Activated CD4-positive, alpha-beta T cell treated with anti-CD3 and anti-CD28 coated beads for 36 hours (primary cell): ENCODE measurements at regions of chr11 and their contacts with region 1.

Region 1: GRCh38 chr11:33987975-33988580 is 63.5 kb upstream of the CAPRIN1 start:
- DNase-seq: peak; percentile 87
- ATAC-seq: peak; percentile 91
- H3K4me3 Mint-ChIP-seq: no peak overlapping the region
- H3K27ac Mint-ChIP-seq: no peak overlapping the region
- H3K4me1 Mint-ChIP-seq: peaks cover 4% of the 10 kb centered on the region
- H3K27me3 Mint-ChIP-seq: peaks cover 7% of the 10 kb centered on the region

Region 2: GRCh38 chr11:33808228-33808828 is 179.8 kb before region 1 on chr11:
- CTCF ChIA-PET with region 1: interaction called, 19 read pairs
- POLR2A ChIA-PET with region 1: no interaction called
- intact Hi-C with region 1: loop called (anchors 1 to 2 kb)
- DNase-seq: peak; percentile 91
- ATAC-seq: peak; percentile 90
- H3K4me3 Mint-ChIP-seq: no peak overlapping the region
- H3K27ac Mint-ChIP-seq: no peak overlapping the region
- H3K4me1 Mint-ChIP-seq: no peaks in the 10 kb centered on the region
- H3K27me3 Mint-ChIP-seq: peaks cover 6% of the 10 kb centered on the region

Region 3: DNA sequence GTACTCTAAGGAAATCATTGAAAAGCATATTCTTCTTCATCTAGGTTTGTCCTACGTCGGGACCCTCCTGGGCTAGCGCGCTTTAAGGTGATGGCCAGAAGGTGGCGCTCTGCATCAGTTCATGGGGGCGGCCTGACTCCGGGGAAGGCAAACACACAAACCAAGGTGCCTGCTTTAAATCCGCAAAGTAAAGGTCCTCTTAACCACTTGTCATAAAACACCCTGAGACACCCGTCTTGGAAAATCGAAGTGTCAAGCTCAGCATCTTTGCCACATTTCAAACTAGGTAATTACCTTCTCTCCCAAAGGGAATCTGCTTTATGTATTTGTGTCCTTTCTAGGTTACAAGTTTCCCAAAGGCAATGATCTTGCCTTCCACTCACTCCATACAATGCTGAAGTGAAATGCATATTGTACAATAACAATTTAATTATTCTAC is 130.1 kb before region 1 on chr11:
- CTCF ChIA-PET with region 1: interaction called, 30 read pairs
- POLR2A ChIA-PET with region 1: no interaction called
- intact Hi-C with region 1: loop called (anchors 1 kb)
- DNase-seq: peak; percentile 88
- ATAC-seq: peak; percentile 88
- H3K4me3 Mint-ChIP-seq: no peak overlapping the region
- H3K27ac Mint-ChIP-seq: no peak overlapping the region
- H3K4me1 Mint-ChIP-seq: no peaks in the 10 kb centered on the region
- H3K27me3 Mint-ChIP-seq: peaks cover 32% of the 10 kb centered on the region

Region 4: DNA sequence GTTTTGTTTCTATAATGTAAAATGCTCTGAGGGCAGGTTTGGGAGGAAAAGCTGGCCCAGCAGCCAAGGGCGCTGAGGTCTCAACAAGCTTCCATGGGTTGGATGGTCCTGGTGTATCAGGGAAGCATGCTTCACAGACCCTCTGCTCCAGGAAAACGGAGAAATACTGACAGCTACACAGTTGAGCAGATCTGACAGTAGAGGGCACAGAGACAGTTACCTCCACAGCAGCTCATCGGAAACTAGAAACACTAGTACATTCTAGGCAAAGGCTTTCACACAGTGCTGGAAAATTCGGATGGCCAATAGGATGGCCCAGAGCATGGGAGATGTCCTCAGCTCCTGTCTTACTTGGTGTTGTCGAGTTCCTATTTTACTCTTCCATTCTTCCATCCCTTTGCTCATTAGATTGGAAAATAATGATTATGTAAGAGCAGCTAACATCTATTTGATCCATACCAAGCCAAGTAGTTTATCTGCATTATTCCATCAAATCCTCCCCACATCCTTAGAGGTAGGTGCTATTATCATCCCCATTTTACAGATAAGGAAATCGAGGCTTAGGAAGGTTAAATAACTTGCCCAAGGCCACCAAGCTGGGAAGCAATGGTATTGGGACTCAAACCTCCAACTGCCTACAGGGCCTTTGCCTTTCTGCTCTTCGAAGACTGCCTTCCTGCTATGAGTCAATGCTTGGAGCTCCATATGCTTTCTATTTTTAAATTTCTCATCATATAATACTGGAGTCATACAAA is 124.5 kb before region 1 on chr11:
- CTCF ChIA-PET with region 1: interaction called, 30 read pairs
- POLR2A ChIA-PET with region 1: no interaction called
- intact Hi-C with region 1: loop called (anchors 1 kb)
- DNase-seq: no peak
- ATAC-seq: no peak
- H3K4me3 Mint-ChIP-seq: no peak overlapping the region
- H3K27ac Mint-ChIP-seq: no peak overlapping the region
- H3K4me1 Mint-ChIP-seq: peaks cover 3% of the 10 kb centered on the region
- H3K27me3 Mint-ChIP-seq: peaks cover 60% of the 10 kb centered on the region

Region 5: DNA sequence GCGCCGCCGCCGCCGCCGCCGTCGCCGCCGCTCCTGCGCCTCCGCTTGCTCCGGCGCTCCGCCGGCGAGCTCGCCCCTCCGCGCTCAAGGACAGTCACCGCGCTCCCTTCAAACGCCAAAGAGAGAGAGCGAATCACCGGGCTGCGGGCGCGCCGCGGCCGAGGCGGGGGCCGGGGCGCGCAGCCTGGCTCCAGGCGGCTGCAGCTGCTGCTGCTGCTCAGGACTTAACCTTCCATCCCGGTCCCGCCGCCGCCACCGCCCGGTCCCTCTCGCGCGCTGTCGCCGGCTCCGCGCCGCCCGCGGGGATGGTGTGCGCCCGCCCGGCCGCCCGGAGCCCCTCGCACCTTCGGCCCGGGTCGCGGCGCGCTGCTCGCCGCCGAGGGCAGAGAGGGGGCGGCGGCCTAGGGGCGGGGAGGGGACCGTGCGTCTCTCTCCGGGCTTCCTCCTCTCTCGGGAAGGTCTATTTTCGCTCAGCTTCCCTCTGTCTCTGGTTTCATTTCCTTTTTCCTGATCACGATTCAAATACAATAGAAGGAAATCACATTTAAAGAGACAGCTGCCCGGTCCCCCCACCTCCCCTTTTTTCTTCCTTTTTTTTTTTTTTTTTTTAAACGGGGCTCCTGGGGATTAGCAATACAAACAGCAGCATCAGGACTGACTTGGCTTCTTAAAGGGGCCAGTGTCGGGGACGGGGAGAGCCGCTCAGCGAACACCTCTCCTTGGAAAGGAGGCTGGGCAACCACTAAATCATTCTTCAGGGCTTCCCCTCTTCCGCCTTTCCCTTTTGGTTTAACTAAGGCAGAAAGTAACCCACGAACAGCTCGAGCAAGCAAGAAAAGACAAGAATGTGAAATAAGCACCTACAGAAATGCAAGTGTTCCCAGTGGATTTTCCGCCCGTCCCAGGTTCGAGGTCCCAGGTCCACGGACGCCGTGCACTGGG is 118.3 kb before region 1 on chr11:
- CTCF ChIA-PET with region 1: interaction called, 11 read pairs
- POLR2A ChIA-PET with region 1: no interaction called
- intact Hi-C with region 1: no loop called
- DNase-seq: peak; percentile 35
- ATAC-seq: peak; percentile 74
- H3K4me3 Mint-ChIP-seq: peak overlapping the region; percentile 63
- H3K27ac Mint-ChIP-seq: no peak overlapping the region
- H3K4me1 Mint-ChIP-seq: peaks cover 9% of the 10 kb centered on the region
- H3K27me3 Mint-ChIP-seq: peaks cover 62% of the 10 kb centered on the region

Region 6: DNA sequence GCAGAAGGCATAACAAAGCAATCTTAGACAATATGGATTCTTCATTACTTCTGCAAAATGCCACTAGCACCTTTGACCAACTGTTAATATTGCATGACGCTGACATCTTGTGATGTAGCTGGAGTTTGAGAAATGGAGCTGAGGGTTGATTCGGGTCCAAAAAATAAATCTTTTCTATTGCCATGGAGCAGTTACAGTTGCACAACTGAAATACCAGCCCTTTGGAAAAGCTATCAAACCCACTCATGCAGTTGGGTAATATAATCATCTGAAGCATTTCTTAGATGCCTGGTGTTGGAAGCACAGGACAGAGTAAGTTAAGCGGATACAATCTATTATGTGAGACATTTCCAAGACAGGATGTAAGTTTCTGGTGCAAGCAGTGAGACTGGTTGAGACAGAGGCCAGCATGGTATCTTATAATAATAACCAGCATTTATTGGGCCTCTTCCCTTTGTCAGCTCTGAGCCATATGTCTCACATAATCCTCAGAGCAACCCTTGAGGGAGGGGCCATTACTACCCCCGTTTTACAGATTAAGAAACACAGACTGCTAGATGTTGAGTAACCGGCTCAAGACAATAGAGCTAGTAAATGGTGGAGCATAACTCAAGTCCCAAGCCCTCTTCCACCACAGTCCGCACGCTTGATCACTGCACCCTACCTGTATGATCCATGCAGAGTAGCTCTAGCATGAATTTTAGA is 11.4 kb before region 1 on chr11:
- CTCF ChIA-PET with region 1: interaction called, 10 read pairs
- POLR2A ChIA-PET with region 1: no interaction called
- intact Hi-C with region 1: no loop called
- DNase-seq: no peak
- ATAC-seq: no peak
- H3K4me3 Mint-ChIP-seq: no peak overlapping the region
- H3K27ac Mint-ChIP-seq: no peak overlapping the region
- H3K4me1 Mint-ChIP-seq: no peaks in the 10 kb centered on the region
- H3K27me3 Mint-ChIP-seq: peaks cover 11% of the 10 kb centered on the region